ENCODE measurements at regions of chr1 and their contacts with region 1.

Region 1: DNA sequence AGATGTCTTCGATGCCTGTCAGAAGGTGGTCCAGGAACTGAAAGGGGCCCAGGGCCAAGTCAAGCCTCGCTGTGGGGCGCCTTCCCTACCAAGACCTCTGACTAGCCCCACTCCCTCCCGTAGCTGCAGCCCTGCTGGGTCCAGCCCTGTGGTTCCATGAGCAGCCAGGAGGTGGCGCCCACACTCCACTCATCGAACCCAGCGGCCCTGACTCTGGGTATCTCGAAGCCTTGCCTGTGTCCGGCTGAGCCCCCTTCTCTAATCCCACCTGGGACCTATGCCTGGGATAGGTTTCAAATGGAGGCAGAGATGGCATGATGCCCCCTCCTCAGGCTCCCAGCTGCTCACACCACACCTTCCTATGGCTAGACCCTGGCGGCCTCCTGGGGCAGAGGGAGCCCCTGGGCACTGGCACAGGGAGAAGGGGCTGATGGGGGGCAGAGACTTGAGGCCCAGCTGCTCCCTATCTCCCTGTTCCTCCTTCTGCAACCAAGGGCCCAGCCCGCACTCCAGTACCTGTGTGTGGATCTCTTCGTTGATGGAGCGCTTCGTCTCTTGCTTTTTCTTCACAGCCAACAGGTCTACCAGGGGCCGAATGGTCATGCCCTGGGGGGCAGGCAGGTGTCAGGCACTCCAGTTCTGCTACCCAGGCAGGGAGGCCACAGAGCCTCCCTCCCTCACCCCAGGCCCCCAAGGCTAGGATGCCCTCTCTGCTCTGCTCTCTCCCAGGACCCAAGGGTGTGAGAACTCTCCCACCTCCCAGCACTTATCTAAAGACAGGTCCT is 52.0 kb downstream of the SLC9A1 start:
- DNase-seq: peak; percentile 74
- H3K4me3 ChIP-seq: no peak overlapping the region
- H3K27ac ChIP-seq: no peak overlapping the region
- H3K4me1 ChIP-seq: peaks cover 16% of the 10 kb centered on the region
- H3K27me3 ChIP-seq: no peaks in the 10 kb centered on the region
- CTCF ChIP-seq: peak; percentile 96

Region 2: GRCh38 chr1:26618561-26618960 is 484.3 kb before region 1 on chr1:
- CTCF ChIA-PET with region 1: no interaction called
- POLR2A ChIA-PET with region 1: no interaction called
- intact Hi-C with region 1: no loop called
- DNase-seq: no peak
- H3K4me3 ChIP-seq: no peak overlapping the region
- H3K27ac ChIP-seq: peak overlapping the region; percentile 4
- H3K4me1 ChIP-seq: peaks cover 21% of the 10 kb centered on the region
- H3K27me3 ChIP-seq: no peaks in the 10 kb centered on the region
- CTCF ChIP-seq: no peak

Region 3: DNA sequence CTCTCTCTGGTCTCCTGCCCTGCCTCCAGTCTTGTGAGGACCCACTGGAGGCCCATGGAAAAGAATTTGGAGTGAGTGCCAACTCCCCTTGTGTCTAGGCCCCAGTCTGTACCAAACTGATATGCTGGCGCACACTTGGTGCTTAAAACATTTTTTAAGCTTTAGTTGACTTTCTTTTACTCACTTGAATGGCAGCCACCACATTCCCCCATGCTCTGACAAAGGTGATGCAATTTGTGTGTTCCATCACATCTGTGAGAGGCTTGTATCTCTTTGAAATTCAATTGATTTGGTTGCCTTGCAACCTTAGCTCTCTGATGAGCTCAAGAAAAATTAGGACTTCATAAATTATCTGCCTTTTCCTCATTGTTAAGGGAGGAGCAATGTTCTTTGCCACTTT is 101.0 kb after region 1 on chr1:
- CTCF ChIA-PET with region 1: no interaction called
- POLR2A ChIA-PET with region 1: no interaction called
- intact Hi-C with region 1: loop called (anchors 2 kb)
- DNase-seq: no peak
- H3K4me3 ChIP-seq: no peak overlapping the region
- H3K27ac ChIP-seq: no peak overlapping the region
- H3K4me1 ChIP-seq: no peaks in the 10 kb centered on the region
- H3K27me3 ChIP-seq: no peaks in the 10 kb centered on the region
- CTCF ChIP-seq: no peak